ENCODE measurements at regions of chr19 and their contacts with region 1.

Region 1: DNA sequence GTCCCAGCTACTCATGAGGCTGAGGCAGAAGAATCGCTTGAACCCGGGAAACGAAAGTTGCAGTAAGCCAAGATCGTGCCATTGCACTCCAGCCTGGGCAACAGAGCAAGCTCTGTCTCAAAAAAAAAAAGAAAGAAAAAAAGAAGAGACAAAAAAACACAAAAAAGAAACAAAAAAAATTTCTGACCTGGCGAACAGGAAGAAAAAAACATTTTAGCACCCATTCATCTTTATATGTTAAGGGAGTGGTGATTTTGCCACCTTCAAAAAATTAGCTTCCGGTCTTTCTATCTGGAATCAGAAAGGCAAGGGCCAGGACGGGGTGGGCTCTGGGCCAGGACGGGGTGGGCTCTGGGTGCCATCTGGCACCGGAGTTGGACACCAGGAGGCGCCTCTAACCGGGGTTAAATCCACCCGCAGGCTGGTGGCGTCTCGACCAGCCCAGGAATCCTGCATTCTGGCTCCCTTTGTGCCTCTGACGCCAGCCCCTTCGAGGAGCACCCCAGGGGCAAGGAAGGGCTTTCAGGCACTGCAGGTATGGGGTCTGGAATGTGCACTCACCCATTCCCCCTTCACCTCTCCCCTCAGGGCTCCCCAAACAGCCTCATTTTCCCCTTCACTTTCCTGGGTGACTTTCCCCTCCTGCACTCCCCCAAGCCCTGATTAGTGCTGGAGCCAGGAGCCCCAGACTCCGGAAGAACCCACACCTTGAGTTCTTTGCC is 10.4 kb upstream of the ZSWIM4 start:
- DNase-seq: peak; percentile 86
- ATAC-seq: peak; percentile 81
- H3K4me3 ChIP-seq: no peak overlapping the region; the same call in 1 of the 2 replicates
- H3K27ac ChIP-seq: no peak overlapping the region
- H3K4me1 ChIP-seq: peaks cover 19% of the 10 kb centered on the region
- H3K27me3 ChIP-seq: no peaks in the 10 kb centered on the region
- CTCF ChIP-seq: peak; percentile 90

Region 2: GRCh38 chr19:13839130-13839937 is 54.4 kb after region 1 on chr19:
- CTCF ChIA-PET with region 1: interaction called, 8 read pairs
- POLR2A ChIA-PET with region 1: interaction called, 3 read pairs
- intact Hi-C with region 1: loop called (anchors 2 kb)
- DNase-seq: peak; percentile 94
- ATAC-seq: peak; percentile 25
- H3K4me3 ChIP-seq: peak overlapping the region; percentile 82
- H3K27ac ChIP-seq: peak overlapping the region; percentile 96
- H3K4me1 ChIP-seq: peaks cover 72% of the 10 kb centered on the region
- H3K27me3 ChIP-seq: no peaks in the 10 kb centered on the region
- CTCF ChIP-seq: no peak

Region 3: DNA sequence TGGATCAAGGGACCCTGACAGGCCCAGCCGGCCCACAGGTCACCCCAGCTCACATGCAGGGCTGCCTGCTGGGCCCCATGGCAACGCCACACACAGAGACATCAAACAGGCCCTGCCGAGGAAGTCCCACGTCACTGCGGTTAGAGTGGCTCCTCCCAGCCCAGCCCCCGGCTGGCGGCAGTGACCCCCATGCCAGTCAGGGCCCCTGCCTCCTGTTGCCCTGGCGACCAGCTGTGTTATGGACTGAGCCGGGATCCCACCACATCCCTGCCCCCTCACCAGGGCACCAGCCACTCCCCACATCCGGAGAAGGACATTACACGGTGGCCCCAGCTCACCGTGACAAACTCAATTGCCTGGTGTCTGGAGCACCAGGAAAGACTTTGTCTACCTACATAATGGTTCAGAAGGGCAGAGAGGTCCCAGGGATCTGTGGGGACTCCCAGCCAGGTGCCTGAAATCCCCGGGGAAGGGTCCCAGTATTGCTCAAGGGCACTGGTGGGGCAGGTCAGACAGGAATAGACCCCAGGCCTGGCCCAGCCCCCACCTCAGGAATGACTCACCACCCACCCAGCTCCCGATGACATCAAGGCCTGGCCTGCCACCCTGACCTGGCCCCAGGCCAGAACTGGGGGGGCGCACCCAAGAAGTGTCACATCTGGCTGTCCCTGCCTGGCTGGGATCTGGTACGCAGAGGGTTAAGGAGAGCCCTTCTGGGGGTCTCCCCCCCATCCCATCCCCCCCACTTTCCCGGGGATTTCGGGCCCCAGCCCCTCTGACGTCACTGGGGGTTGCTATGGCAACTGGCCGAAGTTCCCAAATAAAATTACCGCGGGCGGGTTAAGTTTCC is 61.9 kb after region 1 on chr19:
- CTCF ChIA-PET with region 1: no interaction called
- POLR2A ChIA-PET with region 1: interaction called, 11 read pairs
- intact Hi-C with region 1: loop called (anchors 2 kb)
- DNase-seq: peak; percentile 95
- ATAC-seq: peak; percentile 26
- H3K4me3 ChIP-seq: peak overlapping the region; percentile 64
- H3K27ac ChIP-seq: peak overlapping the region; percentile 99
- H3K4me1 ChIP-seq: peaks cover 72% of the 10 kb centered on the region
- H3K27me3 ChIP-seq: no peaks in the 10 kb centered on the region
- CTCF ChIP-seq: no peak

Region 4: GRCh38 chr19:14006243-14006765 is 221.4 kb after region 1 on chr19 and contains the start of gene RFX1:
- CTCF ChIA-PET with region 1: no interaction called
- POLR2A ChIA-PET with region 1: interaction called, 13 read pairs
- intact Hi-C with region 1: no loop called
- DNase-seq: peak; percentile 100
- ATAC-seq: peak; percentile 90
- H3K4me3 ChIP-seq: peak within 1 kb of the TSS; percentile 84
- H3K27ac ChIP-seq: peak within 1 kb of the TSS; percentile 91
- H3K4me1 ChIP-seq: peaks cover 13% of the 10 kb centered on the region
- H3K27me3 ChIP-seq: no peaks in the 10 kb centered on the region
- CTCF ChIP-seq: no peak
- total RNA-seq, gene RFX1: 7.5 and 9.2 TPM in 2 replicates